Breast epithelium (tissue), 4 donors: ENCODE measurements at regions of chr20 and their contacts with region 1.

Region 1: DNA sequence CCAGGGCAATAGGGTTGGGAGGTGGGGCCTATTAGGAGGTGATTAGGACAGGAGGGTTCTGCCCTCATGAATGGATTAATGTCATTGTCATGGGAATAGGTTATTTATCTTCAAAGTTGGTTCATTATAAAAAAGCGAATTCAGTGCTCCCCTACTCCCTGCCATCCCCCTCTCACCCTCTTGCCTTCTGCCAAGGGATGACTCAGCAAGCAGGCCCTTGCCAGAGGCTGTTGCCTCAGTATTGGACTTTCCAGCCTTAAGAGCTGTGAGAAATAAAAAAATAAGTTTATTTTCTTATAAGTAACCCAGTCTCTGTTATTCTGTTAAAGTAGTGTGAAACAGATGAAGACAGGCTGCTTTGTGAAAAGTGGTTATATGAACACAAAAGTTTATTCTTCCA is 381.1 kb upstream of the ZFP64 start:
- DNase-seq: no peak
- H3K4me3 ChIP-seq: no peak overlapping the region
- H3K27ac ChIP-seq: no peak overlapping the region
- H3K4me1 ChIP-seq: no peaks in the 10 kb centered on the region
- H3K27me3 ChIP-seq: no peaks in the 10 kb centered on the region
- CTCF ChIP-seq: no peak
- POLR2A ChIP-seq: no peak

Region 2: GRCh38 chr20:52542131-52542530 is 30.6 kb before region 1 on chr20:
- intact Hi-C with region 1: loop called (anchors 2 kb)
- DNase-seq: no peak
- H3K4me3 ChIP-seq: no peak overlapping the region
- H3K27ac ChIP-seq: no peak overlapping the region
- H3K4me1 ChIP-seq: no peaks in the 10 kb centered on the region
- H3K27me3 ChIP-seq: no peaks in the 10 kb centered on the region
- CTCF ChIP-seq: no peak
- POLR2A ChIP-seq: no peak

Region 3: GRCh38 chr20:52761867-52762266 is 189.2 kb after region 1 on chr20:
- intact Hi-C with region 1: no loop called
- DNase-seq: no peak
- H3K4me3 ChIP-seq: no peak overlapping the region
- H3K27ac ChIP-seq: no peak overlapping the region
- H3K4me1 ChIP-seq: no peaks in the 10 kb centered on the region
- H3K27me3 ChIP-seq: no peaks in the 10 kb centered on the region
- CTCF ChIP-seq: no peak
- POLR2A ChIP-seq: no peak